PC-9 (cell line): ENCODE measurements at regions of chr11 and their contacts with region 1.

Region 1: GRCh38 chr11:110654456-110654855 is 57.8 kb downstream of the ARHGAP20 start:
- DNase-seq: no peak
- H3K4me3 ChIP-seq: no peak overlapping the region
- H3K27ac ChIP-seq: no peak overlapping the region
- H3K4me1 ChIP-seq: no peaks in the 10 kb centered on the region
- H3K27me3 ChIP-seq: no peaks in the 10 kb centered on the region
- CTCF ChIP-seq: no peak

Region 2: DNA sequence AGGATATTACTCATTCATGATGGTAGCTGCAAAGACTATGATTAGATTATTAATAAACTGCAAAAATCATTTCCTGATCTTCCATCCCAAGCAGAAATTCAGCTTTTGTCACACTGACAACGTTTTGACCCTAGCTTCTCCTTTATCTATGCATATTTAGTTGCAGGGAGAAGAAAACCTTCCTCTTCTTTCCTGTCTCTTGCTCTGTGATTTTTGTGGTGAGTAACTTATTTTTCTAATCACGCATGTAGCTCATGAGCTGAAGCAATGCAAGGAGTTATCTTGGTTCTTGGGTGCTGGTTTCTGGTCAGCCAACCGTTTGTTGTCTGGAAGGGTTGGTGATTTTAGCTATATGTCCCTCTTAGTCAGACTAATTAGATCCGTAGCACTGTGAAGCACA is 168.3 kb before region 1 on chr11:
- CTCF ChIA-PET with region 1: no interaction called
- POLR2A ChIA-PET with region 1: no interaction called
- intact Hi-C with region 1: loop called (anchors 5 kb)
- DNase-seq: no peak
- H3K4me3 ChIP-seq: no peak overlapping the region
- H3K27ac ChIP-seq: no peak overlapping the region
- H3K4me1 ChIP-seq: no peaks in the 10 kb centered on the region
- H3K27me3 ChIP-seq: no peaks in the 10 kb centered on the region
- CTCF ChIP-seq: no peak